ENCODE measurements at regions of chr10 and their contacts with region 1.

Region 1: DNA sequence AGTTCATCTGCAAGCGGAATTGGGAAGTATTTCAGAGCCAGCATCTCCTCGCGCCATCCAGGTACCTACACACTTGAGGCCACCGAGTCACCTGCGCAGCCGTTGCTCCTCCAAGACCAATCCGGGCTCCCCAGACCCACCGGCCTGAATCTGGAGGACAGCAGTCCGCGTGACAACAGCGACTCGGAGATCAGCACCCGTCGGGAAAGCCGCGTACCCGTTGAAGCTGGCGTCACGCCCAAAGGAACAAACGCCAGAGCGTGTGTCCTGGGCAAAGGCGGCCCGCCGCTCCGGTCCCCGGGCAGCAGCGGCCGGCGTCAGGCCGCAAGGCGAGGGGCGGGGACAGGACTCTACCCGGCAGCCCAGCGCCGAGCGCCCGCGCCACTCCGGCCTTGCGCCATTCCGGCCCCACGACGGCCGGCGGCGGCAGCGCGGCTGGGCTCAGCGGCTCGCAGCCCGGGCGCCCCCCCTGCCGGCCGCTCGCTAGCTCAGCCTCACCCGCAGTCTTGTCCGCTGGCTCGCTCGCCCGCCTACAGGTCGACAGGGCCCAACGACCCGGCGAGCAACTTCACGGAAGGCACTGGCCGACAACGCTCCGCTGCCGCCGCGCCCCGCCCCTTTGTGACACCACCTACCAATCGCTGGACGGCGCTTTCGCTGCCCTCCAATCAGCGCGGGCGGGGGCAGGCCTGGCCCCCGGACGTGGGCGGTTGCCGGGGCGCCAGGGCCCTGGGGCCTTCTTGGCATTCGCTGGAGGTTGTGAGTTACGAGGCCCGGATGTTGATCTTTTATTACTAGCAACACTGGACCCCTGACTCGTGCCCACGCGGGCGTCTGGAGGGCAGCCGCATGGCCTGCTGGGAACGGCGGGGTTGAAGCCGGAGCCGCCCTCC is at the start of gene ZFAND4:
- DNase-seq: peak; percentile 93
- H3K4me3 Mint-ChIP-seq: peak within 1 kb of the TSS; percentile 85
- H3K27ac Mint-ChIP-seq: peak within 1 kb of the TSS; percentile 71
- H3K4me1 Mint-ChIP-seq: peaks cover 31% of the 10 kb centered on the region
- H3K27me3 Mint-ChIP-seq: no peaks in the 10 kb centered on the region
- total RNA-seq, gene ZFAND4: 9.2 and 9.3 TPM in 2 replicates

Region 2: GRCh38 chr10:45135443-45136198 is 536.8 kb before region 1 on chr10:
- intact Hi-C with region 1: no loop called
- DNase-seq: no peak
- H3K4me3 Mint-ChIP-seq: no peak overlapping the region
- H3K27ac Mint-ChIP-seq: no peak overlapping the region
- H3K4me1 Mint-ChIP-seq: no peaks in the 10 kb centered on the region
- H3K27me3 Mint-ChIP-seq: peaks cover 4% of the 10 kb centered on the region

Region 3: DNA sequence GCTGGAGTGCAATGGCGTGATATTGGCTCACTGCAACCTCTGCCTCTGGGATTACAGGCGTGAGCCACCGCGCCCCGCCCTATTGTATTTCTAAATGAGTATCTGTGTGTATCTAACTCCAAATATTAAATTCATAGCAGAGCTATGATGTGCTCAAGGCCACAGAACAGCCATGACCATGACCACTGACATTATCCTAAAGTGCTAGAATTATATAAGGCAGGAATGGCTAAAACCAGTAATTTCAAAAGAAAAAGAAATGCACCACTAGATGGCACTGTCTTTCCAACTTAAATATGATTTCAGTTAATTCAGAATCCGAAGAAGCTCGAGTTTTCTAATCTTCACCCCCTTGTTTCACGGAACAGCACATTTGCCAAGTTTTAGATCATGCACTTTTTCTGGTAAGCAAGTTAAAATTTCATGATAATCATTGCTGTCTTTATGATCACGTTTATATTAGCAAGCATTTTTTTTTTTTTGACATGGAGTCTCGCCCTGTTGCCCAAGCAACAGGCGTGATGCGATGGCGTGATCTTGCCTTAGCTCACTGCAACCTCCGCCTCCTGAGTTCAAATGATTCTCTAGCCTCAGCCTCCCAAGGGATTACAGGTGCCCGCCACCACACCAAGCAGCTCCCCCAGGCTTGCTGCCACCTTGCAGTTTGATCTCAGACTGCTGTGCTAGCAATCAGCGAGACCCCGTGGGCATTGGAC is 422.3 kb before region 1 on chr10:
- intact Hi-C with region 1: loop called (anchors 10 kb)
- DNase-seq: no peak
- H3K4me3 Mint-ChIP-seq: peak overlapping the region; percentile 34
- H3K27ac Mint-ChIP-seq: no peak overlapping the region
- H3K4me1 Mint-ChIP-seq: peaks cover 4% of the 10 kb centered on the region
- H3K27me3 Mint-ChIP-seq: peaks cover 20% of the 10 kb centered on the region

Region 4: GRCh38 chr10:45470098-45471012 is 202.1 kb before region 1 on chr10:
- intact Hi-C with region 1: loop called (anchors 5 kb)
- DNase-seq: peak; percentile 40
- H3K4me3 Mint-ChIP-seq: peak overlapping the region; percentile 35
- H3K27ac Mint-ChIP-seq: peak overlapping the region; percentile 84
- H3K4me1 Mint-ChIP-seq: peaks cover 32% of the 10 kb centered on the region
- H3K27me3 Mint-ChIP-seq: no peaks in the 10 kb centered on the region

Region 5: DNA sequence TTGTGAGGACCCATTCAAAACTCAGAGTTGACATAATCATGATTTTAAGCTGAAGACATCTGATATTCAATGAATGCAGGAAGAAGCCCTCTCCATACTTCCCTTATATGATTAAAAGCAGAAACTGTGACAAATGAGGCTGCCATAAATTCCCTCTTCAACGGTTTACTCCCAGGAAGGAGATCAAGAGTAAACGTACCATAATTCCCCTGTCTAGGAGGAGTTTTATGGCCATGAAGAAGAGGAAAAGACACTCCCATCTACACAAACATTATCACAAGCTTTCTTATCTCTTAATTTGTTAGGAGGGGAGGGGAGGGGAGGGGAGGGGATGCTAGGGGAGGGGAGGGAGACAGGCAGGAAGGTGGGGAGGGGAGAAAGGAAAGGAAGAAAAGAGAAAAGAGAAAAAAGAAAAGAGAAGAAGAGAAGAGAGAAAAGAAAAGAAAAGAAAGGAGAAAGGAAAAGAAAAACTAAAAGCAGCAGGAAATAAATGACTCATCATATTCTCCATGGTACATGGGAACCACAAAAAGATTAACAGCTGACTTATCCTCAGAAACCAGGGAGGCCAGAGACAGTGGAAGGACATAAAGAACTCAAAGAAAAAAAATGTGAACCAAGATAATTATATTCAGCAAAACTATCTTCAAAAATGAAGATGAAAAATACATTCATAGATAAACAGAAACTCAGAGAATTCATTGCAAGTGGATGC is 176.8 kb before region 1 on chr10:
- intact Hi-C with region 1: no loop called
- DNase-seq: no peak
- H3K4me3 Mint-ChIP-seq: no peak overlapping the region
- H3K27ac Mint-ChIP-seq: no peak overlapping the region
- H3K4me1 Mint-ChIP-seq: peaks cover 4% of the 10 kb centered on the region
- H3K27me3 Mint-ChIP-seq: no peaks in the 10 kb centered on the region

Region 6: GRCh38 chr10:45594276-45595106 is 77.9 kb before region 1 on chr10:
- intact Hi-C with region 1: loop called (anchors 5 kb)
- DNase-seq: peak; percentile 88
- H3K4me3 Mint-ChIP-seq: peak overlapping the region; percentile 85
- H3K27ac Mint-ChIP-seq: peak overlapping the region; percentile 62
- H3K4me1 Mint-ChIP-seq: peaks cover 24% of the 10 kb centered on the region
- H3K27me3 Mint-ChIP-seq: peaks cover 10% of the 10 kb centered on the region

Region 7: DNA sequence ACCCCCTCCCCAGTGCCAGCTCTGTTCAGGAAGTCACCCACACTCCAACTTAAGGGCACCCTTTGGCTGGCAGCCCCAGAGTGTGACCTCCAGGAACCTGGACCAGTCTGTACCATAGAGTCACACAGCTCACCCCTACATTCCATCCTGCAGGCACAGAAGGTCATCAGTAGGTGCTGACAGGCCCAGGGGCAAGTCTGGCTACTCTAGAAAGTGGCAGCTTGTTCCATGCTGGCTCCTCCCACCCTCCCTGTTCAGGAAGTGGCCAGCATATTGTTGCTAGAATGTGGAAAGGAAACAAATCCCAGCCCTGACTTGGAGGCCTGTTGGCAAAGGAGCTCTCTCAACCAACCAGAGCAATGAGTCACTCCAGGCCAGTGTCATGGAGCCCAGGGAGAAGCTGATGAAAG is 361.2 kb after region 1 on chr10:
- intact Hi-C with region 1: no loop called
- DNase-seq: no peak
- H3K4me3 Mint-ChIP-seq: no peak overlapping the region
- H3K27ac Mint-ChIP-seq: no peak overlapping the region
- H3K4me1 Mint-ChIP-seq: peaks cover 19% of the 10 kb centered on the region
- H3K27me3 Mint-ChIP-seq: peaks cover 5% of the 10 kb centered on the region